ENCODE measurements at regions of chr4 and their contacts with region 1.

Region 1: DNA sequence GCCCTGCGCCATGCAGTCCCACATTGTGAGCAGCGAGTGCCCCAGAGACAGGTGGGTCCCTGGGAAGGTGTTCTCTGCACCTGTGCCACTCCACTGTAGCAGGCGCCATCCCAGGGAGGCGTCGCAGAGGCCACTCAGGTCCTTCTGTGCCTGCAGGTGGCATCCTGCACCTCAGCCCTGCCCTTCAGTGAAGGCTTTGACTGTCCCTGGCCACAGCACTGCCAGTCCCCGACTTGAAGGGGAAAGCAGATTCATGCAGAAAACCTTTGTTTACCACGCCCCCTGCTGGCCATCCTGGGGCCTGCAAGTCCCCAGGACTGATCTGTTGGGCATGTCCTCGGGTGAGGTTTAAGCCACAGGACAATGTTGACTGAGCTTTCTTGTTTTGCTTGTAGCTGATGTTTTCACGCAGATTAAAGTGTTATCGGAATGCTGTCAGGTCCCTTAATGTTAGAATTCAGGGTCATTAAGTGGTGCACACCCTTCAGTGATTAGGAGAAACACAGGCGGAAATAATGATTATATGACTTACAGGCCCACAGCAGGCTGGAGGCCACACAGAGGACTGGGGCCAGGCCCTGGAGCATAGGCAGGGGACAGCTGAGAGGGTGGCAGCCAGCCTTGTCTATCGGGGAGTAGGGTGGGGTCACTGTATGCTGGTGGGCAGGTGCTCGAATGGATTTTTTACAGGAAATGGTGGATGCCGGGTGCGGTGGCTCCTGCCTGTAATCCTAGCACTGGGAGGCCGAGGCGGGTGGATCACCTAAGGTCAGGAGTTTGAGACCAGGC is 5.0 kb downstream of the TACC3 start:
- DNase-seq: peak; percentile 83 to 89
- H3K4me3 ChIP-seq: no peak overlapping the region
- H3K4me3 Mint-ChIP-seq: no peak overlapping the region
- H3K27ac Mint-ChIP-seq: peak overlapping the region; percentile 81
- H3K4me1 ChIP-seq: peaks cover 6% of the 10 kb centered on the region; the same call in 1 of the 2 replicates
- H3K4me1 Mint-ChIP-seq: peaks cover 11% of the 10 kb centered on the region
- H3K27me3 ChIP-seq: no peaks in the 10 kb centered on the region
- H3K27me3 Mint-ChIP-seq: no peaks in the 10 kb centered on the region
- CTCF ChIP-seq: peak; percentile 89 to 94

Region 2: GRCh38 chr4:1683736-1684505 is 42.4 kb before region 1 on chr4 and contains the start of gene FAM53A:
- CTCF ChIA-PET with region 1: interaction called, 11 read pairs
- POLR2A ChIA-PET with region 1: no interaction called
- intact Hi-C with region 1: no loop called
- DNase-seq: peak; percentile 86 to 97
- H3K4me3 ChIP-seq: peak within 1 kb of the TSS; percentile 72
- H3K4me3 Mint-ChIP-seq: peak within 1 kb of the TSS; percentile 77
- H3K27ac Mint-ChIP-seq: peak within 1 kb of the TSS; percentile 59
- H3K4me1 ChIP-seq: peaks cover 10% of the 10 kb centered on the region; the same call in 1 of the 2 replicates
- H3K4me1 Mint-ChIP-seq: peaks cover 8% of the 10 kb centered on the region
- H3K27me3 ChIP-seq: no peaks in the 10 kb centered on the region
- H3K27me3 Mint-ChIP-seq: no peaks in the 10 kb centered on the region
- CTCF ChIP-seq: no peak
- total RNA-seq, gene FAM53A: 4.1 and 5.2 TPM in 2 replicates

Region 3: DNA sequence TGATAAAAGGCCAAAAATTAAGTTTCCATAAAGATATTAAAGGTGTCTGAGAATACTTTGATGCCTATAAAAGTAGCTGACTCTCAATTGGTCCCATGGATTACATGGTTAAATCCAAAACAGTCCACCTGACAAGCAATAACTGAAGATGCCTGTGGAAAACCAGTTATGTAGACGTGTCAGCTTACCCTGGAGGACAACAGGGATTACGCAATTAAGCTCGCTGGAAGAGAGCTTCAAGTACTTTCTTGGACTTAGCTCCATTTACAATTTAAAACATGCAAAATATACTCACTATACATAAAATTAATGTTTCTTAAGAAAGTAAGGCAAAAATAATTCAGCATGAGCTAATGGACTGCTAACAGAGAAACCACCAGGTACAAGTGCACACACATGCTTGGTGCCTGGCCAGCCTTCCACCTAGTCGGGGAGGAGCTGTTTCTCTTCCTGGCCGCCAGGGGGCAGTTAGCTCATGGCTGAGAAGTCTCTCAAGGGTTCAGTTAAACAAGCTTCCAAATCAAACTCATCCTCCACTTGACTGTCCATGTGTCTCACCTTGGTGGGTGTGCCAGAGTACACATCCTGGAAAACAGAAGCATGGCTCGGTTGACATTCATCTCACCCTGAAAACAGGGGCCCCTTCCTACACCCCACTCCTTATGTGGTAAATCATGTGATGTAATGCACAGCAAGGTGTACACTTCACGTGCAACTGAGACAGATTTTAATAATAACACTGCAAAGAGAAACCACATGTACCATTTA is 33.0 kb before region 1 on chr4:
- CTCF ChIA-PET with region 1: interaction called, 16 read pairs
- POLR2A ChIA-PET with region 1: interaction called, 11 read pairs
- intact Hi-C with region 1: loop called (anchors 1 kb)
- DNase-seq: peak; percentile 79 to 88
- H3K4me3 ChIP-seq: no peak overlapping the region
- H3K4me3 Mint-ChIP-seq: no peak overlapping the region
- H3K27ac Mint-ChIP-seq: no peak overlapping the region
- H3K4me1 ChIP-seq: no peaks in the 10 kb centered on the region
- H3K4me1 Mint-ChIP-seq: no peaks in the 10 kb centered on the region
- H3K27me3 ChIP-seq: no peaks in the 10 kb centered on the region
- H3K27me3 Mint-ChIP-seq: no peaks in the 10 kb centered on the region
- CTCF ChIP-seq: peak; percentile 82 to 87

Region 4: GRCh38 chr4:1712216-1713002 is 13.9 kb before region 1 on chr4 and contains the start of gene SLBP:
- CTCF ChIA-PET with region 1: interaction called, 7 read pairs
- POLR2A ChIA-PET with region 1: interaction called, 42 read pairs
- intact Hi-C with region 1: loop called (anchors 1 kb)
- DNase-seq: peak; percentile 97 to 98
- H3K4me3 ChIP-seq: peak within 1 kb of the TSS; percentile 68
- H3K4me3 Mint-ChIP-seq: peak within 1 kb of the TSS; percentile 99
- H3K27ac Mint-ChIP-seq: peak within 1 kb of the TSS; percentile 99
- H3K4me1 ChIP-seq: peaks cover 29% of the 10 kb centered on the region
- H3K4me1 Mint-ChIP-seq: peaks cover 29% of the 10 kb centered on the region
- H3K27me3 ChIP-seq: no peaks in the 10 kb centered on the region
- H3K27me3 Mint-ChIP-seq: no peaks in the 10 kb centered on the region
- CTCF ChIP-seq: no peak
- total RNA-seq, gene SLBP: 113 and 116 TPM in 2 replicates

Region 5: DNA sequence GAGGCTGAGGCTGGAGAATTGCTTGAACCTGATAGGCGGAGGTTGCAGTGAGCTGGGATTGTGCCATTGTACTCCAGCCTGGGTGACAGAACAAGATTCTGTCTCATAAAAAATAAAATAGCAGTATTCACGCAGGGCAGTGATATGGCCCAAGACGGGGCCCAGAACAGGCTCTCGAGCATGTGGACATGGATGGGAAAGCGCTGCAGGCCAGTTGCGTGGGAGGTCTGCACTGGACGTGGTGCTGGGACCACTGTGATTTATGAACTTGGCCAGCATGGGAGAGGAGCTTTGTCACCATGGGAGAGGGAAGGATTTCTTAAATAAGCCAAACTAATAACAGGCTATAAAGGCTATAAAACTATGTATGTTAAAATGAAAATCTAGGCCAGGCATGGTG is 196.5 kb after region 1 on chr4:
- CTCF ChIA-PET with region 1: interaction called, 11 read pairs
- POLR2A ChIA-PET with region 1: no interaction called
- intact Hi-C with region 1: no loop called
- DNase-seq: no peak
- H3K4me3 ChIP-seq: no peak overlapping the region
- H3K4me3 Mint-ChIP-seq: no peak overlapping the region
- H3K27ac Mint-ChIP-seq: no peak overlapping the region
- H3K4me1 ChIP-seq: no peaks in the 10 kb centered on the region
- H3K4me1 Mint-ChIP-seq: no peaks in the 10 kb centered on the region
- H3K27me3 ChIP-seq: no peaks in the 10 kb centered on the region
- H3K27me3 Mint-ChIP-seq: no peaks in the 10 kb centered on the region
- CTCF ChIP-seq: no peak

Region 6: GRCh38 chr4:1967512-1968149 is 241.3 kb after region 1 on chr4:
- CTCF ChIA-PET with region 1: no interaction called
- POLR2A ChIA-PET with region 1: no interaction called
- intact Hi-C with region 1: no loop called
- DNase-seq: no peak
- H3K4me3 ChIP-seq: no peak overlapping the region
- H3K4me3 Mint-ChIP-seq: no peak overlapping the region
- H3K27ac Mint-ChIP-seq: no peak overlapping the region
- H3K4me1 ChIP-seq: no peaks in the 10 kb centered on the region
- H3K4me1 Mint-ChIP-seq: peaks cover 6% of the 10 kb centered on the region
- H3K27me3 ChIP-seq: no peaks in the 10 kb centered on the region
- H3K27me3 Mint-ChIP-seq: no peaks in the 10 kb centered on the region
- CTCF ChIP-seq: no peak